A673 (cell line): ENCODE measurements at regions of chr6 and their contacts with region 1.

Region 1: GRCh38 chr6:116003668-116004067 is 57.0 kb downstream of the FRK start:
- DNase-seq: no peak
- H3K4me3 ChIP-seq: no peak overlapping the region
- H3K27ac ChIP-seq: no peak overlapping the region
- H3K4me1 ChIP-seq: peaks cover 10% of the 10 kb centered on the region
- H3K27me3 ChIP-seq: no peaks in the 10 kb centered on the region
- CTCF ChIP-seq: no peak

Region 2: GRCh38 chr6:115986026-115986425 is 17.6 kb before region 1 on chr6:
- CTCF ChIA-PET with region 1: no interaction called
- POLR2A ChIA-PET with region 1: no interaction called
- intact Hi-C with region 1: loop called (anchors 2 kb)
- DNase-seq: no peak
- H3K4me3 ChIP-seq: no peak overlapping the region
- H3K27ac ChIP-seq: no peak overlapping the region
- H3K4me1 ChIP-seq: peaks cover 12% of the 10 kb centered on the region
- H3K27me3 ChIP-seq: no peaks in the 10 kb centered on the region
- CTCF ChIP-seq: no peak